G401 (cell line): ENCODE measurements at regions of chr7 and their contacts with region 1.

Region 1: DNA sequence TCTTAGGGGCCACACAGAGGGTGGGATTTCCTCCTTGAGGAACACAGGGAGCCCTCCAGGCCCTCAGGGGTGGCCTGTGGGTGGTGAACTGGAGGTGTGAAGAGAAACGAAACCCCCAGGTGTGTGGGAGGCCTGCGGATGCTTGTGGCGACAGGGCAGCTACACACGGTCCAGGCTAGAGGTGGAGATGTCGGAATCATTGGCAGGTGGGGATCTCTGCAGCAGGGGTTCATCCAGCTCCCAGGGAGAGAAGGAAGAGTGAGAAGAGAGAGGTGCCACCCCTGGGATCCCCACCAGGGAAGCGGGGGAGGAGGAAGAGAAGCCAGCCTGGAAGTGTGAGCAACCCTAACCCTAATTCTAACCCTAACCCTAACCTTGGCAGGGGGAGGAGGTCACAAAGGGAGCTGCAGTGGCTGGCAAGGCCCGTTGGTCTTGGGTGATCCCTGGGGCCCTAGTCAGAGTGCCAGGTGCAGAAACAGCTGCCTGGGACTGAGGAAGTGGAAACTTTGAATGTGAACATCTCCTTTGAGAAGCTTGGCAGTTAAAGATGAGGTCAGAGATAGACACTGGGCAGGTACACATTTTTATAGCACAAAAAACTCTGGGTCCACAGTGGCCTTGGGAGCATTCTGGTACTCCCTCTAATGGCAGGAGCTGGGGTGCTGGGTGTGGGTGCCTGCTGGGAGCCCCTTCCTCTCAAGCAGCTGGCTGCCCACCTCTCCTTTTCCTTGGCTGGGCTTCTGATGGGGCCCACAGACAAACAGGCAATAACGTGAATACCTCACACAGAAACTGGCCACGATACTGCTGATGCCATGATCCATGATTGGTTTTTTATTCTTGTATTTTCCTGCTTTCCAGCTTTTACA is 6.8 kb upstream of the AEBP1 start:
- DNase-seq: no peak

Region 2: DNA sequence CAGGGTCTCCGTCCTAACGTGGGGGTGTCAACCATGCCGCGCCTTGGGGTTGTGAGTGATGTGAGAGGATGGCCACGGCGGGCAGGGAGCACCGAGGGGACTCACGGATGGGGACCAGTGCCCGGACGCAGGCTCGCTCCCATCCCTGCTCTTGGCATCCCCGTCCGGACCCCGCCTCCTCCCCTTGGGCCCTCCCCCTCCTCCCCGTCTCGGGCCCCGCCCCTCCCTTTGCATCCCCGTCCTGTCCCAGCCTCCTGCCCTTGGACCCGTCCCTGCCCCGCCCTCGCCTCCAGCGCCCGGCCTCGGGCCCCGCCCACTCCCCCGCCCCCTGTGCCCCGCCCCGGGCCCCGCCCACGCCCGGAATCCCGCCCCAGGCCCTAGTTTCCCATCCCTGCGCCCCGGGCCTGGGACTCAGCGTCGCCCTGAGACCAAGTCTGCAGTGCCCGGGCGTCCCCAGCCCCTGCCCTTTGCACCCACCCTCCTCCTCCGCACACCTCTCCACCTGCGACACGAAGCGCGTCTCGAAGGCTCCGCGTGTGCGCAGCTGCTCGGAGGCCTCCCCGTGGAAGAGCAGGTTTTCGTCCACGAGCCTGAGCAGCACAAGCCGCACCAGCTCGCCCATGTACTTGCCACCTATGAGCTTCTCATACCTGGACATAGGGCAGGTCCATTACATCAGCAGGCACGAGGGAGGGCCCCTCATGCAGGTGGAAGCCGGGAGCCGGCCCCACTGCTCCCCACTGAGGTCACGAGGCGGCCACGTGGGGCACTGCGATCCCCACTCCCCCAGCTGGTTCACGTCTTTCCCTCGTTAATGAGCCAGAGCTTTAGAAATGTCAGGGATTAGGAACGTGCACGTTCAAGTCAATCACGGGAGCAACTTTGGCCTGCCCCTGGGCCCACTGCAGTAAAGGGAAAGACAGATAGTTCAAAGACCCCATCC is 48.9 kb after region 1 on chr7:
- in situ Hi-C with region 1: no loop called
- DNase-seq: peak; percentile 67

Region 3: DNA sequence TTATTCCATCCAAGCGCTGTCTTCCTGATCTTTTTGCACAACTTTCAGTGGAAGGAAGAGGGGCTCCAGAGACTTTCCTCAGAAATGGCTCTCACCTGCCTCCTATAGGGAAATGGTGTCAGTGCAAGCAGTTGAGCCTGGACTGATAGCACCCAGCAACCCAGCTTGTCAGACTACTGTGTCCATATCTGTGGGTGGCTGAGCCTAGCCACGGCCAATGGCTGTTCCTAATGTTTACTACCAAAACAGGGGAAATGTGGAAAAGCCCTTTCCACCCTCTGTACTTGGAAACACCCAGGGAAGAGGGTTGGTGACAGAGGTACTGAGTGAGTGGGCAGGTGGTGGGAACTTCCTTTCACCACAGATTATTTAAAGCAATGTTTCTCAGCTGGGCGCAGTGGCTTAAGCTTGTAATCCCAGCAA is 99.2 kb after region 1 on chr7:
- in situ Hi-C with region 1: loop called (anchors 10 kb)
- DNase-seq: peak; percentile 77